Activated B cell treated with CpG ODN at 0.5 μM for 24 hours (primary cell): ENCODE measurements at regions of chr21 and their contacts with region 1.

Region 1: GRCh38 chr21:42062236-42063022 is 8.7 kb upstream of the UMODL1 start:
- DNase-seq: peak; percentile 53
- ATAC-seq: peak; percentile 51
- H3K4me3 Mint-ChIP-seq: peak overlapping the region; percentile 77
- H3K27ac Mint-ChIP-seq: peak overlapping the region; percentile 91
- H3K4me1 Mint-ChIP-seq: peaks cover 85% of the 10 kb centered on the region
- H3K27me3 Mint-ChIP-seq: no peaks in the 10 kb centered on the region
- CTCF ChIP-seq: no peak

Region 2: GRCh38 chr21:41229509-41230248 is 832.8 kb before region 1 on chr21:
- CTCF ChIA-PET with region 1: no interaction called
- POLR2A ChIA-PET with region 1: no interaction called
- intact Hi-C with region 1: loop called (anchors 5 kb)
- DNase-seq: no peak
- ATAC-seq: peak; percentile 82
- H3K4me3 Mint-ChIP-seq: peak overlapping the region; percentile 78
- H3K27ac Mint-ChIP-seq: peak overlapping the region; percentile 91
- H3K4me1 Mint-ChIP-seq: peaks cover 82% of the 10 kb centered on the region
- H3K27me3 Mint-ChIP-seq: no peaks in the 10 kb centered on the region
- CTCF ChIP-seq: no peak

Region 3: GRCh38 chr21:41832596-41833496 is 229.6 kb before region 1 on chr21:
- CTCF ChIA-PET with region 1: no interaction called
- POLR2A ChIA-PET with region 1: no interaction called
- intact Hi-C with region 1: loop called (anchors 5 kb)
- DNase-seq: no peak
- ATAC-seq: peak; percentile 67
- H3K4me3 Mint-ChIP-seq: peak overlapping the region; percentile 44
- H3K27ac Mint-ChIP-seq: peak overlapping the region; percentile 20
- H3K4me1 Mint-ChIP-seq: peaks cover 45% of the 10 kb centered on the region
- H3K27me3 Mint-ChIP-seq: no peaks in the 10 kb centered on the region
- CTCF ChIP-seq: no peak

Region 4: GRCh38 chr21:41926117-41926806 is 136.2 kb before region 1 on chr21:
- CTCF ChIA-PET with region 1: no interaction called
- POLR2A ChIA-PET with region 1: interaction called, 4 read pairs
- intact Hi-C with region 1: loop called (anchors 1 kb)
- DNase-seq: no peak
- ATAC-seq: peak; percentile 60
- H3K4me3 Mint-ChIP-seq: peak overlapping the region; percentile 90
- H3K27ac Mint-ChIP-seq: peak overlapping the region; percentile 98
- H3K4me1 Mint-ChIP-seq: peaks cover 90% of the 10 kb centered on the region
- H3K27me3 Mint-ChIP-seq: no peaks in the 10 kb centered on the region
- CTCF ChIP-seq: no peak

Region 5: DNA sequence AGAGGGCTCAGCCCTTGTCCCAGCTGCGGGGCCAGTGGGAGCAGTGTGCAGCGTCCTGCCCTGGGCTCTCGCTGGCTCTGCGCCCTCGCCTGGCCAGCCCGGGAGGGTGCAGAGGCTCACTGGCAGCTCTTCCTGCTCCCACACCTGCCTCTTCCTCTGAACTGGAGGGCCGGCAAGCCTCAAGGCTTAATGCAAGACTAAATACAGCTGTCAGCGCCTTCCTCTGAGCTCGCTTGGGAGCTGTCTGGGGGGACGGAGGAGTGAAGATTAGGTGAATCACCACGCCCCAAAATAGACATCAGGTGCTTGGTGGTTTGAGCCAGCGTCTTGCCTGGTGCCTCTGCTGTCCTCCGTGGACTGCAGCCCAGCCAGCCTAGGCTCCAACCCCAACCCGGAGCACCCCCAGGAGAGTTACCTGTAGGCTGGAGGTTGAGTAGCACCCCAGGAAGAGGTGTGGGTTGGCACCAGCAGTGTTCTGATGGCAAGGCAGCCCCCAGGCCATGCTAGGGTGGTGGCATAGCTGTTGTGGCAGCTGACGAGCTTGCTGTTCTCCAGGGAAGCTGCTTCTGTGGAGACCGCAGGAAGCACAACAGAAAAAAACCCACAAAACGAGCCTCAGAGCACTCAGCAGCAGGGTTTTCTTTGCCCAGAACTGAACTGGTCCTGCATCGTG is 45.6 kb after region 1 on chr21:
- CTCF ChIA-PET with region 1: interaction called, 5 read pairs
- POLR2A ChIA-PET with region 1: interaction called, 4 read pairs
- intact Hi-C with region 1: loop called (anchors 2 kb)
- DNase-seq: peak; percentile 55
- ATAC-seq: peak; percentile 88
- H3K4me3 Mint-ChIP-seq: peak overlapping the region; percentile 65
- H3K27ac Mint-ChIP-seq: peak overlapping the region; percentile 61
- H3K4me1 Mint-ChIP-seq: peaks cover 28% of the 10 kb centered on the region
- H3K27me3 Mint-ChIP-seq: no peaks in the 10 kb centered on the region
- CTCF ChIP-seq: no peak

Region 6: DNA sequence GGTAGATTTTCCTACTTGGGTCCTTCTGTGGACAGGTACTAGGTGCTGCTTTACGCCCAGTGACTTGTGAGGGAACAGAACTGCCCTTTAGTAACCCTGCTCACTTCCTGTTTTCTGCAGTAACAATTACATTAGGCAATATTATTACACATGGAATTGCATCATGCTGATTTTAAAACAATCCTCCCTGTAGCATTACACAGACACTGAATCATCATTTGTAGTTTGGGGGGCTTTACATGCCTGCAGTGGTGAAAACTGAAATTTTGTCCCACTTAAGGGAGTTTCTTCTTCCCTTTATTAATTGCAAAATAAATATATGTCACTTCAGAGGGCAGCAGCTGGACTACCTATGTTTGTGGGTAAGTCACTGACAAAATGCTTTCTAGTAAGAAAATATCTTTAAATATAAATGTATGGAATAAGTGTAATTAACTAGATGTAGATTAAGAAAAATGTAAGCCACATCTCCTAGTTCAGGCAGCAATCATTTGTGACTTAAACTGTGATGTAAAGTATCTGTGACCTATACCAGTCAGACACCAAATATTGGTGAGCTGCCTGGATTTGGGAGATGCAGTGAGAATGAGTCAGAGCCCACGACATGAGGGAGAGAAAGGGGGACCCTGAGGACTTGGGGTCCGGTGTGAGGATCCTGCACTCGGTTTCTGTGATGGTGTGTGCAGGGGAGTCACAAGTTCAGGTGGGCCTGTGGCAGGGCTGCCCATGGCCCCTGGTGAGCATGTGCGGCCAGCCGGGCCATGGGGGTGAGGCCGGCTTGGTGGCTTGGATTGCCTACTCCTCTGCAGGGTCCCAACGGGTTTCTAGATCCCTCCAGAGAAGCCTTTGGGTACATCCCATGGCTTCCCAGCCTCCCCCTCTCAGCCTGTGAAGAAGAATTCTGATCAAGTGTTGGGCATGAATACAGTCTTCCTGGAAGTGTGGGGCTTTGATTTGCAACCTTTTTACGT is 137.3 kb after region 1 on chr21:
- CTCF ChIA-PET with region 1: no interaction called
- POLR2A ChIA-PET with region 1: no interaction called
- intact Hi-C with region 1: no loop called
- DNase-seq: no peak
- ATAC-seq: peak; percentile 84
- H3K4me3 Mint-ChIP-seq: peak overlapping the region; percentile 46
- H3K27ac Mint-ChIP-seq: no peak overlapping the region
- H3K4me1 Mint-ChIP-seq: peaks cover 26% of the 10 kb centered on the region
- H3K27me3 Mint-ChIP-seq: no peaks in the 10 kb centered on the region
- CTCF ChIP-seq: no peak

Region 7: DNA sequence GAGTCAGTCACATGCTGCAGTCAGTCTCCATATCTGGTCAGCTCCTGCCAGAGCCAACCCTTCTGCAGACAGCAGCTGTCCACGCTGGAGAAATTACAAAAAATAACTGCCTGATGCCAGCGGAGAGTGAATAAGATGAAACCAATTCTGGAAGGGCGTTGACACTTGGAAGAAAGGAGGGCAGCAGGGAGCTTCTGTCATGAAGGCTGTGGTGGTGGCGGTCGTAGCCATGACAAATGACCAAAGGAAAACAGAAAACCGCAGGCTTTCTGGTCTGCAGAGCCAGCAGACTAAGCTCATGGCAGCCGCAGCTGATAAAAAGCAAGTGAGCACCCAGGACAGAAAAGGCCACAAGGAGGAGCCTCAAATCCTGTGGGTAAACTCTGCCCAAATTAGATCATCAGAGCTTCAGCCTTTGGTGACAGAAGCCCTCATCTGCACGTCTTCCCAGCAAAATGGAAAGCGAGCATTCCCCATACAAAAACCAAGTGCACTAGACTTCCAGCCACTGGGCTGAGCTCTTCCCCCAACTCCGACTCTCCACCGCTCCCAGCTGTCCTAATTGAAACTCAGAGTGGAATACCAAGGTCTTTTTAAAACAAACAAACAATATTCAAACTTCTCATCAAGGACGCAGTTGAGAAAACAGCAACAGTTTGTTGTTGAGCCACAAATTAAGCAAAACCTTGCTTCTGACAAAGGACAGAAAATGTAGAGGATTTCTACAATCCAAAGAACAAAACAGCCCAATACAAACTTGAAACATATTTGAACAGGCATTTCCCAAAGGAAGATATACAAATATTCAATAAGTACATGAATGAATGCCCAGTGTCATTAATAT is 404.9 kb after region 1 on chr21:
- CTCF ChIA-PET with region 1: no interaction called
- POLR2A ChIA-PET with region 1: no interaction called
- intact Hi-C with region 1: loop called (anchors 5 kb)
- DNase-seq: peak; percentile 13
- ATAC-seq: no peak
- H3K4me3 Mint-ChIP-seq: peak overlapping the region; percentile 6
- H3K27ac Mint-ChIP-seq: no peak overlapping the region
- H3K4me1 Mint-ChIP-seq: peaks cover 69% of the 10 kb centered on the region
- H3K27me3 Mint-ChIP-seq: peaks cover 3% of the 10 kb centered on the region
- CTCF ChIP-seq: no peak